H1 (cell line): ENCODE measurements at regions of chr6 and their contacts with region 1.

Region 1: DNA sequence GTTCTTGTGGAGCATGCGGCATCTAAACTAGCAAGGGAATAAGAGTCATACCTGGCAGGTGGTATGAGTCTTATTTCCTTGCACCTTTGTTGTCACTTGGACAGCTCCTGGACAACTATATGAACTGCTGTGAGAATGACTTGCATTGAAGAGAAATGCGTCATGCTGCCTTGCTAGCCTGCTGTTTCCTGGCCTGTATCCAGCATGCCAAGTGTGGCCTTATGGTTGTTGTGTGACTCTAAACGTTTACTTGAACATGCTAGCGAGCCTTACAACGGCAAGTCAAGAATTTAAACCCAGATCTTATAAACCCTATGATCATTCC is 90.4 kb downstream of the CEP162 start:
- DNase-seq: no peak
- H3K4me3 ChIP-seq: no peak overlapping the region
- H3K27ac ChIP-seq: no peak overlapping the region
- H3K4me1 ChIP-seq: peaks cover 0 to 2% (median 0%) of the 10 kb centered on the region in 4 experiments; a peak in 1 of 7 replicates
- H3K27me3 ChIP-seq: no peaks in the 10 kb centered on the region
- CTCF ChIP-seq: no peak
- EP300 ChIP-seq: no peak
- POLR2A ChIP-seq: no peak
- RAD21 ChIP-seq: no peak

Region 2: GRCh38 chr6:84119253-84119652 is 17.8 kb before region 1 on chr6:
- CTCF ChIA-PET with region 1: interaction called, 15 read pairs
- POLR2A ChIA-PET with region 1: no interaction called
- DNase-seq: no peak
- H3K4me3 ChIP-seq: no peak overlapping the region
- H3K27ac ChIP-seq: no peak overlapping the region
- H3K4me1 ChIP-seq: no peaks in the 10 kb centered on the region
- H3K27me3 ChIP-seq: no peaks in the 10 kb centered on the region
- CTCF ChIP-seq: peak in 1 of 3 experiments; percentile 6; a peak in 1 of 4 replicates
- EP300 ChIP-seq: no peak
- POLR2A ChIP-seq: no peak
- RAD21 ChIP-seq: peak; percentile 10 to 19; a peak in 1 of 4 replicates